Naive thymus-derived CD8-positive, alpha-beta T cell (primary cell): ENCODE measurements at regions of chr12 and their contacts with region 1.

Region 1: DNA sequence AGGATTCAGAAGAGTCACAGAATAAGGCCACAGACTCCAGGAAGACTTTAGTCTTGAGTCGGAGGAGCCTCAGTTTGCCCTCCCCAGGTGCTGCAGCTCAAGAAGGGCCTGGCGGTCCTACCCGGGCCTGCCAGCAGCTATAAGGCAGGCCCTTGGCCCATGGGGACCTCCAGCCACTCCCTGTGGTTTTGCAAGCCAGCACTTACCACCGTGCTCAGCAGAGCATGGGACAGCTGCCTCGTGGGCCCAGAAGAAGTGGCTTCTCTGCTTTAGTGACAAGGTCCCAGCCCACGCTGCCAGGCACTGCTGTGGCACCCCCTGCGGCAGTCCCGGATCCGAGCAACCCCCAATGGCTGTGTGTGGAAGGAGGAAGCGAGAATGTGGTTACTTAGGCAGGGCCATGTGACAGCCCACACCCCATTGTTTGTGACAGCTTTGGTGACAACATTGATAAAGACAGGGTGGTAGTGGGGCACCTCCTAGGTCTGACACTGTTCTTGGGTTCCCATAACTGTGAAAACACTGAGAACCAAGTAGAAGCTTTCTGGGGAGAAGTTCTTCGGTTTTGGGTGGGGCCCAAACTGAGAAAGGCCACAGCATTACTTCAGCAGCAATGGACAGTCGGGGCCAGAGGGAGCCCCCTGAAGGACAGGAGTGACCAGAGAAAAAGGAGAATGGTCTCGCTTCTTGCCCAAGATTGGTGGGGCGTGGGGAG is at the start of gene SELPLG:
- DNase-seq: peak; percentile 66 to 96 (median 90)
- ATAC-seq: peak; percentile 73 to 75
- H3K4me3 Mint-ChIP-seq: peak within 1 kb of the TSS; percentile 95 to 100 (median 100)
- H3K27ac Mint-ChIP-seq: peak within 1 kb of the TSS; percentile 98 to 100 (median 100)
- H3K4me1 Mint-ChIP-seq: peaks cover 32 to 91% (median 74%) of the 10 kb centered on the region in 4 donors
- H3K27me3 Mint-ChIP-seq: no peaks in the 10 kb centered on the region
- polyA plus RNA-seq, gene SELPLG: 453 to 720 (median 520) TPM

Region 2: GRCh38 chr12:108562348-108563135 is 71.1 kb before region 1 on chr12 and contains the start of gene ISCU:
- POLR2A ChIA-PET with region 1: interaction called, 217 read pairs
- DNase-seq: peak; percentile 97 to 100 (median 99)
- ATAC-seq: peak; percentile 67 to 72
- H3K4me3 Mint-ChIP-seq: peak within 1 kb of the TSS; percentile 97 to 100 (median 100)
- H3K27ac Mint-ChIP-seq: peak within 1 kb of the TSS; percentile 98 to 100 (median 100)
- H3K4me1 Mint-ChIP-seq: peaks cover 18 to 83% (median 55%) of the 10 kb centered on the region in 4 donors
- H3K27me3 Mint-ChIP-seq: no peaks in the 10 kb centered on the region
- polyA plus RNA-seq, gene ISCU: 287 to 373 (median 324) TPM

Region 3: DNA sequence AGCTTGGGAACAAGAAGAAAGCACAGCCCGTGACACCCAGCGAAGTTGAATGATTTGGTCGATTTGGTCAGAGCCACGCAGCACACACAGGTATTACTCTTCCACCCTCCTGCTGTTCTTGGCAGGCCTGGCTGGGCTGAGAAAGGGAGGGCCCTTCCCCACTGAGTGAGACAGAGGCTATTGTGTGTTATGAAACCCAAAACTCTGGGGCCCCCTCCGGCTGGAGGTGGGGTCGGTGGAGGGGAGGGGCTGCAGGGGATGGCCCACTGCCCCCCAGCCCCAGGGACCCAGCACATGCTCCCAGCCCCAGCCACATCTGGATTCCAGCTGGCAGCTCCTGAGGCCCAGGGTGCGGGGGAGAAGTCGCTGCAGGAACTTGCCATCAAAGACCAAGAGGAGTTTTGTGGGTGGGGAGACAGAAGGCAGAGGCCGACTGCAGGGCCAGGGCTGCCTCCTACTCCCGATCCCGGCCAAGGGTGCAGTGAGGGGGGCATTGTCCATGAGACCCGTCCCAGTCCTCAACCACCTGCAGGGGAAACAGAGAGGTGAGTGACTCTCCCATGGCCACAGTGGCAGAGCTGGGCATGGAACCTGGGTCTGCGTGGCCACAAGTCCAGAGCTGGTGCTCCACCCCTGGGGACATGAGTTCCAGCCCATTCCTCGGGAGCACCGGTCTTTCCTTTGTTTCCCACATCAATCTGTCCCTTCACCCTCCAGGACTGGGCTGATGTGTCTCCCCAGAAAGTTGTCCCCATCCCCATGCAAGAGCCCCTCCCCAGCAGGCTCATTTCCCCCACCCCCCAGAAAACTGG is 44.5 kb before region 1 on chr12:
- POLR2A ChIA-PET with region 1: no interaction called
- DNase-seq: peak in 1 of 10 donors; percentile 43
- ATAC-seq: no peak
- H3K4me3 Mint-ChIP-seq: no peak overlapping the region
- H3K27ac Mint-ChIP-seq: no peak overlapping the region
- H3K4me1 Mint-ChIP-seq: no peaks in the 10 kb centered on the region
- H3K27me3 Mint-ChIP-seq: peaks cover 0 to 1% (median 0%) of the 10 kb centered on the region in 5 donors

Region 4: DNA sequence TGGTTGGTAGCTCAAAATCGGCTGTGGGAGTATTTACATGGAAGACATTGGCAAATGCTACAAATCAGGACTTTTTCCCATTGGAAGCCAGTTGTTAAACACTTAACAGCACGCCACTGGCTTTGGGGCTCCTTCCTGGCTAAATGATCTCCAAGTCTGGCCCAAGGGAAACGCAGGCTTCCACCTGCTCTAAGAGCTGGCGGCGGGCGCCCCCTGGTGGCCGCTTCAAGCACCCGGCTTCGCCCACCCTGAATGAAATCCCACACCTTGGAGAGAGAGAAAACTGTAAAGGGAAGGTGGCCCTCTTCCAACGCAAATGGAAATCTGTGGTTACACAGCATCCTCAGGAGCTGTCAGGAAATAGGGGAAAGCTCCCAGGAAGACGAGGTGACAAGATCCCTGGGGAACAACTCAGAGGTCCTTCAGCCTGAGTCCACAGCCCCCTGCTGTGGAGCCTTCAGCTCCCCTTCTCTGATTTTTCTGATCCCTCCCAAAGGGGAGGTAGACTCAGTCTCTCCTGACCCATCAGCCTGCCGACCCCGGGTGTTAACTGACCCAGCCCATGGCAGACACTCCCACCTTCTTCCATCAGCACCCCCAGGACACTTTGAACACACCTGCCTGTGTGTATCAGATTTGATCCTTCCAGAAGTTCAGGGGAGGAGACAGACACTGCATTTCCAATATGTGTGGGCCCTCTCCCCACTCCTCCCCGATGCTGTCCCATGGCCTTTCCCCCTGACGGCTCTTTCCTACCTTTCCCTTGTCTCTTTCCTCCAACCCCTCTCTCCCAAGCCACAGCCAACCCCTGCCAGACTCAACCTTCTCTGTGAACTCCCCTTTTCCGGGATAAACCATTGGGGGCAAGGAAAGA is 15.4 kb before region 1 on chr12:
- POLR2A ChIA-PET with region 1: interaction called, 233 read pairs
- DNase-seq: peak; percentile 59 to 86 (median 78)
- ATAC-seq: peak; percentile 52 to 65
- H3K4me3 Mint-ChIP-seq: peak overlapping the region in 7 of 10 donors; percentile 9 to 68 (median 36)
- H3K27ac Mint-ChIP-seq: peak overlapping the region; percentile 77 to 98 (median 93)
- H3K4me1 Mint-ChIP-seq: peaks cover 45 to 77% (median 72%) of the 10 kb centered on the region in 4 donors
- H3K27me3 Mint-ChIP-seq: no peaks in the 10 kb centered on the region

Region 5: DNA sequence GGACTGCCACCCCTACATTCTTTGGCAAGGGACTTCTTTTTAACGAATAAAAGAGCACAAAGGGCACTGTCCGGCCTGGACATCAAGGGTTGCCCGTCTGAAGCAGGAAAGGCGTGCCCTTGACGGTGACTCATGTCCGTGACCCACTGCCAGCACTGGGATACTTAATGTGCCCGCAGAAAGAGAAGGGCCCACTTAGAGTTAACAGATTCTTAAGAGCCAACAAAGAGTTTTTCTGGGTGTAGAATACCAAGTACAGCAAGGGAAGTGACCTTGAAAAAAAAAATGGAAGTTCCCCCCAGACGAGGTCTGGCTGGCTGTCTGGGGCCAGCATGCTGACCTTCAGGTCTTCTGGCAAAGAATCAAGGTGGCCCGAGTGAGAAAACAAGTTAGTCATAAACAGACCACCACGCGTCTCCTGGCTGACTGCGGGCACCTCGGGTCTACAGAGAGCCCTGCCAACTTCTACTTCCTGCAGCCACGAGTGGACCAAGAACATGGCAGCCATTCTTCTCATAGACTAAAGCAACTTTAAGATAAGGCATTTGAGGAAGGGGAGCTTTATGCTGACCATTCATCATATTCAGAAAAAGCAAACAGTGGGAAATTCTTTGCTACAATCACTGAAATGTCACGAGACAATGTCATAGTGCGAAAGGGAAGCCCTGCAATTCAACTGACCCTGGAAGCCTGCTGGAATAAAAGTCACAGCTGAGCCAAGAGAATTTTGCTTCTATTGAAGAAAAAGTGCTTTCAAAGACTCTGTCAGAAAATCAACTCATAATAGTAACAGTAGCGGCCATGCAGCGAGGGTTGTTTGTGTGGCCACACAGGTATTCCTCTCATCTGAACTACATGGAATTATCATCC is 10.5 kb after region 1 on chr12:
- POLR2A ChIA-PET with region 1: interaction called, 110 read pairs
- DNase-seq: no peak
- ATAC-seq: no peak
- H3K4me3 Mint-ChIP-seq: no peak overlapping the region
- H3K27ac Mint-ChIP-seq: peak overlapping the region in 4 of 10 donors; percentile 38 to 89 (median 67)
- H3K4me1 Mint-ChIP-seq: peaks cover 33 to 80% (median 41%) of the 10 kb centered on the region in 4 donors
- H3K27me3 Mint-ChIP-seq: no peaks in the 10 kb centered on the region

Region 6: DNA sequence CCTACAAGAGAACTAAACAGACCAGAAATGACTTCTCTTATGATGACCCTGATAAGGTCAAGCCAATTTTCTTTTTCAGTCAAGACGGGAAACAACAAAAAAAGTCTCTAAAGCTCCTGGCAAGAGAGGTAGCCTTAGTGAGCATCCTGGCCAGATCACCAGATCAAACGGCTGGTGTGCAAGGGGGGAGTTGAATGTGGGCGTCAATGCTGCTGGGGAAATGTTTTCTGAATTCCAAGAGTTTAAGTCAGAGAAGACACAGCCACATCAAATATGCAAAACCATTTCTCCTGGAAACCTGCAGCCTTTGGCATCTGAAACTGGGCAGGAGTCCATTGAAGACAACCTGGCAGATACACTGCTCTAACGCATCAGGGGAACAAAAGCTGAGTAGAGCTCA is 16.0 kb after region 1 on chr12:
- POLR2A ChIA-PET with region 1: interaction called, 110 read pairs
- DNase-seq: no peak
- ATAC-seq: no peak
- H3K4me3 Mint-ChIP-seq: no peak overlapping the region
- H3K27ac Mint-ChIP-seq: peak overlapping the region in 6 of 10 donors; percentile 6 to 63 (median 32)
- H3K4me1 Mint-ChIP-seq: peaks cover 22 to 45% (median 28%) of the 10 kb centered on the region in 4 donors
- H3K27me3 Mint-ChIP-seq: no peaks in the 10 kb centered on the region

Region 7: GRCh38 chr12:108664338-108665258 is 30.9 kb after region 1 on chr12:
- POLR2A ChIA-PET with region 1: interaction called, 30 read pairs
- DNase-seq: peak; percentile 47 to 91 (median 82)
- ATAC-seq: peak; percentile 99
- H3K4me3 Mint-ChIP-seq: peak overlapping the region in 3 of 10 donors; percentile 21 to 55 (median 39)
- H3K27ac Mint-ChIP-seq: peak overlapping the region in 9 of 10 donors; percentile 62 to 95 (median 84)
- H3K4me1 Mint-ChIP-seq: peaks cover 4 to 37% (median 9%) of the 10 kb centered on the region in 4 donors
- H3K27me3 Mint-ChIP-seq: no peaks in the 10 kb centered on the region